ENCODE measurements at regions of chr2 and their contacts with region 1.

Region 1: DNA sequence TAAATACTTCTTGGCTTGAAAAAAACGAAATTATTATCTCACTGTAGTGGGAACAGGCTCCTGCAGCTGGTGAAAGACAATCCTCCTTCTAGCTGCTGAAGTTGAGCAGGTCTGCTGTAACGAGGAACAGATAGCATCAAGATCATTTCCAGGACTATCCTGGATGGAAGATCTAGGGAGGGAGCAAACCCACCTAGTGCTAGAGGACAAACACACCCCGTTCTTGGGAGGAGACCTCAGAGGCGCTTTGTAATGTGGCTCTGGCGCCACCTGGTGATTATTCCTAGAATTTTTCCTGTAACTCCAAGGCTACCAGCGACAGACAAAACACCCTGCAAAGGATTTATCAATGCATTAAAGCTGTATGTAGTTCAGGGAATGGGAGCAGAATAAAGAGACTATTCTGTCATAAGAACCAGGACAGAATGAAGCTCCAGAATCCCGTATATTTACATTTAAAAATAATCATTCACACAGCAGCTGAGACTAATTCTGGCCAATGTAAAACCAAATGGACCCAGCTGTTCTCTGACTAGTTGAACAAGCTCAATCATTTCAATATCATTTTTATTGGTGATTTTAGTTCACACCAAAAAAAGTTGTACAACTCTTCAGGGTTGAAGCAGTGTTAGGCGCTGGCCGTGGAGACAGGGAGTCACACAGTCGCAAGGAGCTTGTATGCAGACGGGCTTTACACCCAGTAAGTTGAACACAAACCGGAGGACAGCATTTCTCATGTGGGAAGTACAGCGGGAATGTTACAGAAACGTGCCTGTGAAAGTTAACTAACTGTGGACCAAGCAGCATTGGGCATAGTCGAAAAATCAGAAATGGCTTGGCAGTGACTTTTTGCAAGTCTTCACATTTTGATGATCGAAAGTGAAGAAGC is 290.3 kb downstream of the TRIB2 start:
- DNase-seq: peak; percentile 68 to 84 (median 72)
- ATAC-seq: peak; percentile 97
- H3K4me3 ChIP-seq: no peak overlapping the region
- H3K27ac ChIP-seq: no peak overlapping the region
- H3K4me1 ChIP-seq: peaks cover 0 to 2% of the 10 kb centered on the region in 2 experiments; a peak in 1 of 5 replicates
- H3K27me3 ChIP-seq: peaks cover 0 to 5% of the 10 kb centered on the region in 2 experiments; a peak in 1 of 5 replicates
- CTCF ChIP-seq: peak; percentile 77 to 85 (median 77)
- EP300 ChIP-seq: no peak
- POLR2A ChIP-seq: no peak
- RAD21 ChIP-seq: peak; percentile 94 to 95

Region 2: GRCh38 chr2:11955314-11955713 is 1051.8 kb before region 1 on chr2:
- CTCF ChIA-PET with region 1: no interaction called
- POLR2A ChIA-PET with region 1: no interaction called
- in situ Hi-C with region 1: no loop called
- intact Hi-C with region 1: loop called (anchors 10 kb)
- DNase-seq: no peak
- ATAC-seq: no peak
- H3K4me3 ChIP-seq: no peak overlapping the region
- H3K27ac ChIP-seq: no peak overlapping the region
- H3K4me1 ChIP-seq: no peaks in the 10 kb centered on the region; a peak in 3 of 5 replicates
- H3K27me3 ChIP-seq: no peaks in the 10 kb centered on the region
- CTCF ChIP-seq: no peak
- EP300 ChIP-seq: no peak
- POLR2A ChIP-seq: no peak
- RAD21 ChIP-seq: no peak

Region 3: DNA sequence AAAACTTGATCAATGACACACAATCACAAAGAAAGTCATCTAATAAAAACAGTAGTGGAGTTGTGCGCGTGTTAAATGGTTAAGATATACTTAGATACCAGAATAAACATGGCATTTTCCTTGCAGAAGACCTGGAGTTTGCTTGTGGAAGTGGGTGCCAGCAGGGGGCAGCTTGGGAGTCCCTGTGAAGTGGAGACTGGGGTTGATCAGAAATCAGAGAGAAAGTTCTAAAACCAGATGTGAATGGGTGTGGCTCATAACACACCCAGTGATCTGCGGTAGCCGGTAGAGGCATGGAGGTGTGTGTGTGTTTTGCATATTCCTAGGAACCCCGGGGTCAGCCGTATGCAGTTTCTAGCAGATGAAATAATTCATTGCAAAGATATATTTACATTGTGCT is 590.5 kb before region 1 on chr2:
- CTCF ChIA-PET with region 1: interaction called, 3 read pairs
- POLR2A ChIA-PET with region 1: no interaction called
- in situ Hi-C with region 1: no loop called
- intact Hi-C with region 1: loop called (anchors 5 kb)
- DNase-seq: peak; percentile 45 to 78 (median 59)
- ATAC-seq: peak; percentile 94
- H3K4me3 ChIP-seq: no peak overlapping the region
- H3K27ac ChIP-seq: no peak overlapping the region
- H3K4me1 ChIP-seq: peaks cover 0 to 5% of the 10 kb centered on the region in 2 experiments; a peak in 2 of 5 replicates
- H3K27me3 ChIP-seq: no peaks in the 10 kb centered on the region
- CTCF ChIP-seq: peak; percentile 66 to 77 (median 69)
- EP300 ChIP-seq: no peak
- POLR2A ChIP-seq: no peak
- RAD21 ChIP-seq: peak; percentile 60 to 73

Region 4: DNA sequence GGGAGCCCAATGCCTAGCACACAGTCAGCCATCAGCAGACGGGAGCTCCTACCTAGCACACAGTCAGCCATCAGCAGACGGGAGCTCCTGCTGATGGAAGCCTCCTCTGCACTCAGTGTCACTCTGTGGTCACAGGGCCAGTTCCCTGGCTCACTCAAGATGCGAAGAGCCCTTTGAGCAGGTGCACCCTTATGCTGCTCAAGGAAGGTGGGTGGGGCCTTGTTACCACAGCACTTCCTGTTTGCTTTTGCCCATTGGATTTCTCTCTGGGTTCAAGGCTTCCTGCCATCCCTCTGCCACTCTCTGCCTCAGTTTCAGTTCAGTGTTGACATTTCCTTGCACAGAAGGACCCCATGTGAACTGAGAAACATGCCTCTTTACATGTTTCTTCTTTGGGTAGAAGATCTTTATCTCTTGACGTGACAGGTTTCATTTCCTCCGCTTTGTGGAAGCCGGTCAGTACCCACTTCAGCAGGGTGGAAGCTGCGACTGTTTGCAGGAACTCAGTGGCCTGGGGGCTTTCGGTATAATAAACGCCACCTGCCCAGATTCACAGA is 278.8 kb before region 1 on chr2:
- CTCF ChIA-PET with region 1: no interaction called
- POLR2A ChIA-PET with region 1: no interaction called
- in situ Hi-C with region 1: loop called (anchors 25 kb)
- intact Hi-C with region 1: no loop called
- DNase-seq: no peak
- ATAC-seq: no peak
- H3K4me3 ChIP-seq: no peak overlapping the region
- H3K27ac ChIP-seq: no peak overlapping the region
- H3K4me1 ChIP-seq: peaks cover 0 to 3% of the 10 kb centered on the region in 2 experiments; a peak in 2 of 5 replicates
- H3K27me3 ChIP-seq: no peaks in the 10 kb centered on the region
- CTCF ChIP-seq: no peak
- EP300 ChIP-seq: no peak
- POLR2A ChIP-seq: no peak
- RAD21 ChIP-seq: no peak

Region 5: DNA sequence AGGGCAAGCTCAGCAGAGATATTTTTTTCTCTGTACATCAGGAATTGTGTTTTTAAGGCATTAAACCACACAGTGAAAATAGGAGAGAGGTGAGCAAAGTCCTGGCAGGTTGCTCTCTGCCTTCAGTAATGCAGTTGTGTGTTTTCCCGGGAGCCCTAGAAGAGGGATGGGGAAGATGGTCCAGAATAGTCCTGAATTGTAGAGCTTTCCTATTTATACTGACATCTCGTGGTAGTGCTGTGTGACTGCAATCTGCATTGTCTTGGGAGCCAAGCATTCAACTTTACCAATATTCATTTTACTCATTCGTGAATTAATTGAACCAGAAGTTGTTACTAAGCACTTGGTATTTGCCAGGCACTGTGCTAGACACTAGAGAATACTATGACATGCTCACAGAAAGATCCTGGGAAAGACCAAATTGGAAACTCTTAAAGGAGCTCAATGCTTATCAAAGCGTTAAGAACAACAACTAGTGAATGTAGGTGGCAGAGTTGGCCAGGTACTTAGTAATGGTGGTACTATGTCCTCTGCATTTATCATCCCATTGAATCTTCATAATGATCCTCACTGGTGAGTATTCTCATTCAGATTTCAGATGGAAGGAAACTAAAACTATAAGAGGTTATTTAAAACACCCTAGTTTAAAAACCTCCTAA is 75.8 kb before region 1 on chr2:
- CTCF ChIA-PET with region 1: no interaction called
- POLR2A ChIA-PET with region 1: no interaction called
- in situ Hi-C with region 1: no loop called
- intact Hi-C with region 1: loop called (anchors 2 kb)
- DNase-seq: peak in 3 of 4 experiments; percentile 9 to 44 (median 27)
- ATAC-seq: peak; percentile 84
- H3K4me3 ChIP-seq: no peak overlapping the region
- H3K27ac ChIP-seq: no peak overlapping the region
- H3K4me1 ChIP-seq: no peaks in the 10 kb centered on the region; a peak in 2 of 5 replicates
- H3K27me3 ChIP-seq: peaks cover 0 to 3% of the 10 kb centered on the region in 2 experiments; a peak in 1 of 5 replicates
- CTCF ChIP-seq: peak; percentile 58 to 69 (median 68)
- EP300 ChIP-seq: no peak
- POLR2A ChIP-seq: no peak
- RAD21 ChIP-seq: peak; percentile 56 to 71

Measured in K562 (cell line).